ENCODE measurements at regions of chr11 and their contacts with region 1.

Region 1: DNA sequence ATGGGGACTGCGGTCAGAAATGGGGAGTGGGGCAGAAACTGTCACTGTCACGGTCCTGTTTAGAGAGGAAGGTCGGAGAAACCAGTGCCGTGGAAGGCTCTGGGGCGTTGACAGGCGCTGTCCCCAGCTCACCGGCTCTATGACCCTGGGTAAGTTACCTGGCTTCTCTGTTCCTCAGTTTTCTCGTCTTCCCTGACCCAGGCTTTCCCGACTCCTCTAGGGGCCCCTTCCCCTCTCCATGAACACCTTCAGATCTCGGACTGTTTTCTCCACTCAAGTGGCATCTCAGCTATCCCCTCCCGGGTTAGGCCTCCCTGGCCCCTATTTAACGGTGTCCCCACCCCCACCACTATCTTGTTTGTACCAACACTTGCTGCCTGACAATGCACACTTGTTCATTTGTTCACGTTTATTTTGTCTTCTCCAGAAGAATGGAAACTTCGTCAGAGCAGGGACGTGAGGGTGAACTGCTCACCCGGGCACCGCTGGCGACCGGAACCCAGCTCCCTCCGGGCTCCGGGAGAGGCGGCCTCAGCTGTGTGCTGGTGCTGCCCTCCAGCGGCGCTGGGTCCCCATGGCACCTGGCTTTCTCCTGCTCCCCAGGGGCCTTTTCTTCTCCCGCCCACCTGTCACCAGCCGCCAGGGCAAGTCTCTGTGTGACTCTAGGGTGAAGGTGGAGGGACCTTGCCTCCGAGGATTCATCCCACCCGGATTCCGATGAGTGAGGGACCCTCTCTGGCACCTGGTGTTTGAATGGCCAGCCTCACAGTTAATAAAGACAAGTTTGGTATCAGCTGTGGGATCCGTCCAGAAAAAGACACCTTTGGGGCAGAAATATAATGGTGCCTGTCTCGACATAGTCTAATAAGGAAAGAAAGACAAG is 33.1 kb upstream of the SLC35C1 start:
- DNase-seq: peak; percentile 86 to 94 (median 94)
- ATAC-seq: peak; percentile 96 to 97
- H3K4me3 ChIP-seq: peak overlapping the region; percentile 43
- H3K27ac ChIP-seq: peak overlapping the region; percentile 27
- H3K4me1 ChIP-seq: no peaks in the 10 kb centered on the region
- H3K27me3 ChIP-seq: no peaks in the 10 kb centered on the region

Region 2: GRCh38 chr11:45371251-45372115 is 400.3 kb before region 1 on chr11:
- intact Hi-C with region 1: loop called in 3 of 4 experiments (anchors 2 to 10 kb)
- DNase-seq: peak; percentile 50 to 83 (median 79)
- ATAC-seq: peak; percentile 46 to 53
- H3K4me3 ChIP-seq: no peak overlapping the region
- H3K27ac ChIP-seq: no peak overlapping the region
- H3K4me1 ChIP-seq: no peaks in the 10 kb centered on the region
- H3K27me3 ChIP-seq: no peaks in the 10 kb centered on the region

Region 3: GRCh38 chr11:45405916-45406670 is 365.7 kb before region 1 on chr11:
- intact Hi-C with region 1: loop called in 1 of 4 experiments (anchors 10 kb)
- DNase-seq: no peak
- ATAC-seq: peak in 1 of 2 donors; percentile 14
- H3K4me3 ChIP-seq: no peak overlapping the region
- H3K27ac ChIP-seq: no peak overlapping the region
- H3K4me1 ChIP-seq: no peaks in the 10 kb centered on the region
- H3K27me3 ChIP-seq: no peaks in the 10 kb centered on the region

Region 4: GRCh38 chr11:45538363-45538762 is 233.4 kb before region 1 on chr11:
- intact Hi-C with region 1: loop called in 1 of 4 experiments (anchors 10 kb)
- DNase-seq: no peak
- ATAC-seq: peak; percentile 72 to 75
- H3K4me3 ChIP-seq: no peak overlapping the region
- H3K27ac ChIP-seq: no peak overlapping the region
- H3K4me1 ChIP-seq: no peaks in the 10 kb centered on the region
- H3K27me3 ChIP-seq: peaks cover 2% of the 10 kb centered on the region

Region 5: GRCh38 chr11:45665206-45665932 is 106.4 kb before region 1 on chr11 and contains the start of gene CHST1:
- intact Hi-C with region 1: loop called in 3 of 4 experiments (anchors 5 to 10 kb)
- DNase-seq: peak; percentile 74 to 88 (median 86)
- ATAC-seq: peak; percentile 85 to 90
- H3K4me3 ChIP-seq: peak within 1 kb of the TSS; percentile 88
- H3K27ac ChIP-seq: no peak within 1 kb of the TSS
- H3K4me1 ChIP-seq: no peaks in the 10 kb centered on the region
- H3K27me3 ChIP-seq: no peaks in the 10 kb centered on the region
- total RNA-seq, gene CHST1: 2.4 to 7.0 (median 3.3) TPM

Measured in right cardiac atrium (tissue), 5 donors.